Activated CD8-positive, alpha-beta T cell treated with anti-CD3 and anti-CD28 coated beads for 36 hours (primary cell): ENCODE measurements at regions of chr22 and their contacts with region 1.

Region 1: DNA sequence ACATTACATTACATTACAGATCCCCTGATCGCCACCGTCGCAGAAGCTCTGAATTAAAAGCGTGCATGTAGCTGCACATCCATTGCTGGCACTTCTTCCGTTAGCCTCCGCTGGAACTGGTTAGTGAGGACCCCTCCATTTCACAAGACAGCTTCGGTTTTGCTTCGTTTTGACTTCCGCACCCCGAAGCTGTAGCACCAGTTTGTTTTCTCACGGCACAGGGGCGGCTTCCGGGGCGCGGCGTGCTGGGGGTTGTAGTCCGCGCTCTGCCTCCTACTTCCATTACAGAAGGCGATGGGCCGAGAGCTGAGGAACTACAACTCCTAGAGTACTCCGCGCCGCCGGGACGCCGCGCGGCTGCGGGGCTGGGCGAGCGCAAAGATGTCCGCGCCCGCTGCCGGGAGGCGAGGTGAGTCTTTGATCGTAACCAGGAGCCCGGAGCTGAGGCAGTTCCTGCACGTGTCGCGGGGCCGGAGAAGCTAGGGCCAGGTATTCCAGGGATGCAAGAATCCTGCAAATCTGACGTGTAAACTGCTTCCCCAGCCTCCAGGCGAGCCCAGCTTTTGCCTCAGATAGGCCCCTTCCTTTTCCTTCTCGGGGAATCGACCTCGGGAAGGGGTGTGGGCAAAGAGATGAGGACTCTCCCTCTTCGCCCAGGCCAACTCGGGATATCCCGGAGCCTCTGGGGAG is at the start of gene PEX26:
- DNase-seq: peak; percentile 97
- ATAC-seq: peak; percentile 98
- H3K4me3 Mint-ChIP-seq: peak within 1 kb of the TSS; percentile 99
- H3K27ac Mint-ChIP-seq: peak within 1 kb of the TSS; percentile 99
- H3K4me1 Mint-ChIP-seq: peaks cover 51% of the 10 kb centered on the region
- H3K27me3 Mint-ChIP-seq: no peaks in the 10 kb centered on the region
- CTCF ChIP-seq: no peak
- total RNA-seq, gene PEX26: 57.8 to 59.7 TPM

Region 2: DNA sequence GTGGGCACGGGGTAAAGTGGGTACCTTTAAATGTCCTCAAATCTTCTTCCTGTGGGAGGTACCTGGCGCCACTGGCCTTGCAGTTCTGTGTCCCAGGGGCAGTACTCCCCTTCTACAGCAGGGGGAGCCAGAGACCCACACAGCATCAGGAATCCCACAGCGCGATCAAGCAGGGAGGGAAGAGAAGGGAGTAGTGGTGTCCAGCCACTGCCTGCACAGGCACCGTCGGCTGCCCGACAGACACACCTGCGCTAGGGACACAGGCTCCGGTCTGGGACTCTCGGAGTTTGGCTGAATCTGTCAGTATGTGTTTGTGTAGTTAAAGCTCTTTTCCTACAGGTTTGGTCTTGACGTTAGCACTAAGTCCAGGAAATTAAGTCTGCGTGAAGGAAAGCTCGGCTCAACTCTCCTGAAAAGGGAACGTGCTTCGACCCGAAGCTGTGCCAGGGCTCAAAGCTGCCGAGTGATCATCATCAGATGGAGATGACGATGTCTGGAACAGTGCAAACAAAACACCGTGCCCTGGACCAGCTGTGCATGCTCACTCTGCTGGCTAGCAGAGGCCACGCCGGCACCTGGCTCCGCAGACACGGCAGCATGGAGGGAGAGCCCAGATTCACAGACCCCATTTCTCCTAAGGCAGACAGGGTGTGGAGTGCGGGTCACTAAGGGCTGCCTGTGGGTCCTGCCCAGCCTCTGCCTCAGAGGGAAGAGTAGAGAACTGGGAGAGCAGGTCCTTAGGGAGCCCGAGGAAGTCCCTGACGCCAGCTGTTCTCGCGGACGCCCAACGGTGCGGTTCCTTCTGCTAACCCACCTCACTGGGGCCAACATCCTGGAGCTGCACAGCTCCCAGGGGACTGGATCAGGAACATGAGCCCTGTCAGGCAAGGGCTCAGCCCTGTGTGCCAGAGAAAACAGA is 247.5 kb before region 1 on chr22:
- CTCF ChIA-PET with region 1: interaction called, 189 read pairs
- POLR2A ChIA-PET with region 1: interaction called, 5 read pairs
- intact Hi-C with region 1: loop called (anchors 5 kb)
- DNase-seq: peak; percentile 88
- ATAC-seq: peak; percentile 99
- H3K4me3 Mint-ChIP-seq: no peak overlapping the region
- H3K27ac Mint-ChIP-seq: no peak overlapping the region
- H3K4me1 Mint-ChIP-seq: peaks cover 4% of the 10 kb centered on the region
- H3K27me3 Mint-ChIP-seq: no peaks in the 10 kb centered on the region
- CTCF ChIP-seq: peak; percentile 99

Region 3: DNA sequence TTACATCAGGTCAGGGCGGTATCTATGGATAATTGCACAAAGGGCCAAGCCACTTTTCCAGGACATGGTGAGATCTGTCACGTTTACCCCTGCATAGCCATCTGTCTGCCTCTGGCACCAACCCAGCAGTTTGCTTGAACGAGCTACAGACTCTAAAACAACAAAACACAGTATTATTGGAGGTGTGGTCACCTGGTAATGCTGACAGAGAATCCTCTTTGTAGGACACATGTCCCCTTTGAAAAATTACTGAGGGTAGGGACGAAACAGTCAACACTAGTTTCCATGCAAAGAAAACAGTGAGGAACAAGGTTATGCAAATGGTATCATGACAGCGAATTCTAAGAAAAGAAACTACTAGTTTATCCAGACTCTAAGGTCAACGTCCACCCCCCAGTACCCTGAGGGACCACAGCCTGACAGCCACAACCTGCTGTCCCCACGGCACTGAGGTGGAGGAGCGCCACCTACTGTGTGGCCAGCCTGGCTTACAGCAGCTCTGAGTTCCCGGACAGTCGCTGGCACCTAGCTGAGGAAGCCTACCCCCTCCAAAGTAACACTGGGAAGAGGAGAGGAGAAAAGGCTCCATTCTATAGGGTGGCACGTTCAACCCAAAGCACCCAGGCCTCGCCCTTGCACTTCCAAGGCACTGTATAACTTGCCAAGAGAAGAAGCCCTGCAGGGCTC is 186.2 kb before region 1 on chr22:
- CTCF ChIA-PET with region 1: interaction called, 12 read pairs
- POLR2A ChIA-PET with region 1: no interaction called
- intact Hi-C with region 1: no loop called
- DNase-seq: peak; percentile 15
- ATAC-seq: no peak
- H3K4me3 Mint-ChIP-seq: no peak overlapping the region
- H3K27ac Mint-ChIP-seq: no peak overlapping the region
- H3K4me1 Mint-ChIP-seq: no peaks in the 10 kb centered on the region
- H3K27me3 Mint-ChIP-seq: no peaks in the 10 kb centered on the region
- CTCF ChIP-seq: no peak

Region 4: GRCh38 chr22:18024276-18024947 is 53.4 kb before region 1 on chr22 and contains the start of gene MICAL3:
- CTCF ChIA-PET with region 1: interaction called, 10 read pairs
- POLR2A ChIA-PET with region 1: interaction called, 5 read pairs
- intact Hi-C with region 1: no loop called
- DNase-seq: peak; percentile 68
- ATAC-seq: peak; percentile 97
- H3K4me3 Mint-ChIP-seq: peak within 1 kb of the TSS; percentile 69
- H3K27ac Mint-ChIP-seq: no peak within 1 kb of the TSS
- H3K4me1 Mint-ChIP-seq: peaks cover 6% of the 10 kb centered on the region
- H3K27me3 Mint-ChIP-seq: peaks cover 39% of the 10 kb centered on the region
- CTCF ChIP-seq: peak; percentile 51
- total RNA-seq, gene MICAL3: 31.6 to 32.4 TPM

Region 5: GRCh38 chr22:18088825-18089568 is 11.2 kb after region 1 on chr22:
- CTCF ChIA-PET with region 1: interaction called, 7 read pairs
- POLR2A ChIA-PET with region 1: interaction called, 13 read pairs
- intact Hi-C with region 1: no loop called
- DNase-seq: no peak
- ATAC-seq: no peak
- H3K4me3 Mint-ChIP-seq: no peak overlapping the region
- H3K27ac Mint-ChIP-seq: no peak overlapping the region
- H3K4me1 Mint-ChIP-seq: peaks cover 20% of the 10 kb centered on the region
- H3K27me3 Mint-ChIP-seq: no peaks in the 10 kb centered on the region
- CTCF ChIP-seq: no peak

Region 6: DNA sequence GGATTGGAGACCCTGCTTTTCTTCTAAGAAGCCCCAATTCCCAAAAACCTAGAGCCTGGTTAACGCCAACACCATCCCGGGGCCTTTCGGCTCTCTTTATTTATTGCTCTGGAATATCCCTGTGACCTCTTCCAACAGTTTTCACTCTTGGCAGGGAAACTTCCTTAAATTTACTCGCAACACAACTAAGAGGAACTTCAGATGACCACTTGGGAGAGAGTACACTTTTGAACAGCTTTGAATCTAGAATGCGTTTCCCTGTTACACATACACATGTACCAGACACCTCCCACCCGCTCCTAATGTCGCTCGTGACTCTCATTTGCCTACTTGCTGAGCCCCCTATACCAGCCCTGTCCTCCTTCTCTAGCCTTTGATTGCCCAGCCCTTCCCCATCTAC is 52.2 kb after region 1 on chr22:
- CTCF ChIA-PET with region 1: no interaction called
- POLR2A ChIA-PET with region 1: no interaction called
- intact Hi-C with region 1: no loop called
- DNase-seq: no peak
- ATAC-seq: no peak
- H3K4me3 Mint-ChIP-seq: no peak overlapping the region
- H3K27ac Mint-ChIP-seq: no peak overlapping the region
- H3K4me1 Mint-ChIP-seq: no peaks in the 10 kb centered on the region
- H3K27me3 Mint-ChIP-seq: no peaks in the 10 kb centered on the region
- CTCF ChIP-seq: no peak